Right cardiac atrium (tissue), 5 donors: ENCODE measurements at regions of chr6 and their contacts with region 1.

Region 1: GRCh38 chr6:116279260-116280063 is at the start of gene TSPYL1:
- DNase-seq: peak; percentile 97 to 98 (median 98)
- ATAC-seq: peak; percentile 98 to 99
- H3K4me3 ChIP-seq: peak within 1 kb of the TSS; percentile 97
- H3K27ac ChIP-seq: peak within 1 kb of the TSS; percentile 97
- H3K4me1 ChIP-seq: no peaks in the 10 kb centered on the region
- H3K27me3 ChIP-seq: no peaks in the 10 kb centered on the region
- total RNA-seq, gene TSPYL1: 90.2 to 98.2 (median 96.3) TPM

Region 2: DNA sequence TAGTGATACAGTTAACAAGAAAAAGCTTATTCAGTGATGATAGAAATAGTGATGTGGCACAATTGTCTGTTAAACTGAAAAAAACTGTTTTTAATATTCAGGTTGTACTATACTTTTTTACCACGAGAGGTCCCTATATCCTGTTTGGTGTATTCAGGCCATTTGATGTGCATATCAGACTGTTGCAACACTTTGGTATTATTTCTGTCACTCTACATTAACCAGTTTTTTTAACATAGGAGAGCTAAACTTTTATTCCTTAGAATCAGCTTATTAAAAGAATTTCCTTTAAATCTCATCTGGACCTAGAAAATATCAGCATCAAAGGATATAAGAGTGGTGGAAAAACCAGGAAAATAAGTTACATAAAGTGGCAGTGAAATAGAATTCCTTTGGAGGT is 62.4 kb before region 1 on chr6:
- intact Hi-C with region 1: no loop called
- DNase-seq: no peak
- ATAC-seq: peak; percentile 55 to 61
- H3K4me3 ChIP-seq: no peak overlapping the region
- H3K27ac ChIP-seq: no peak overlapping the region
- H3K4me1 ChIP-seq: peaks cover 3% of the 10 kb centered on the region
- H3K27me3 ChIP-seq: no peaks in the 10 kb centered on the region

Region 3: GRCh38 chr6:116444092-116444491 is 164.6 kb after region 1 on chr6:
- intact Hi-C with region 1: loop called in 1 of 4 experiments (anchors 10 kb)
- DNase-seq: no peak
- ATAC-seq: peak; percentile 60 to 70
- H3K4me3 ChIP-seq: no peak overlapping the region
- H3K27ac ChIP-seq: no peak overlapping the region
- H3K4me1 ChIP-seq: peaks cover 3% of the 10 kb centered on the region
- H3K27me3 ChIP-seq: no peaks in the 10 kb centered on the region

Region 4: DNA sequence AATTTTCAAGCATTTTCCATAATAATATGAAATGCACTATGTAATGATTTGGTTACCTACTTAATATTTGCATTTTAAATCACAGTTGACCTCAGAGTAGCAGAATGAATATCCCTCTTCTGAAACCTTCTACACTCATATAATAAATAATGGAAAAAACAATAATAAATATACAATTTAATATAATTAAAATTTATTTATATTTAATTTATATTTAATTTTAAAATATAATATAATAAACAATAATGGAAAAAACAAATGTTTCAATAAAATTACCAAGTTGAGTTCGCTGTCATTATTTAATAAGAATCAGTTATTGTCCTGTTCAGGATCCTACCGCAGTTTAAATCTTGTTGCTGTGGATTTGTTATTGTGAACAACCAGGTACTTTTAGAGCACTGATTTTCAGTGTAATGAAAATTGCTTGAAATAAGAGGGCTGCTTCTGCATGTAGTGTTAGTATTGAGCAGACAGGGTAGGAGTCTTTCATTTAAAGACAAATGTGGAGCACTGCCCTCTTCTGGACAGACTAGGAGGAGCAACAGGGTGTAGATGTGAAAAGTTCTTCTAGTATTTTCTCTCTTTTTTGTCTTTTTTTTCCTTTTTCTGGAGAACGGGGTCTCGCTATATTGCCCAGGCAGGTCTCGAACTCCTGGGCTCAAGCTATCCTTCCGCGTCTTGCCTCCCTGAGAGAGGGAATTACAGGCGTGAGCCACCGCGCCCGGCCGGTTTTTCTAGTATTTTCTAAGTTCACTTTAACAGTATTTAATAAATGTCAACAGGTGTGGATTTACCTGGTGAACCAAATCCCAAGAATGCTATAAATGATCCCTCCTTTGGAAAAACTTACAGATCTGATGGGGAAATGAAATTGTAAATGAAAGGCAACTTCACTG is 252.5 kb after region 1 on chr6:
- intact Hi-C with region 1: loop called in 2 of 4 experiments (anchors 10 kb)
- DNase-seq: peak; percentile 44 to 72 (median 47)
- ATAC-seq: peak; percentile 83 to 87
- H3K4me3 ChIP-seq: no peak overlapping the region
- H3K27ac ChIP-seq: no peak overlapping the region
- H3K4me1 ChIP-seq: no peaks in the 10 kb centered on the region
- H3K27me3 ChIP-seq: no peaks in the 10 kb centered on the region

Region 5: GRCh38 chr6:116561377-116562018 is 282.0 kb after region 1 on chr6:
- intact Hi-C with region 1: loop called in 2 of 4 experiments (anchors 10 kb)
- DNase-seq: peak; percentile 62 to 90 (median 80)
- ATAC-seq: peak; percentile 59 to 65
- H3K4me3 ChIP-seq: no peak overlapping the region
- H3K27ac ChIP-seq: no peak overlapping the region
- H3K4me1 ChIP-seq: peaks cover 3% of the 10 kb centered on the region
- H3K27me3 ChIP-seq: no peaks in the 10 kb centered on the region